Posterior cingulate gyrus (tissue), 11 donors: ENCODE measurements at regions of chr6 and their contacts with region 1.

Region 1: DNA sequence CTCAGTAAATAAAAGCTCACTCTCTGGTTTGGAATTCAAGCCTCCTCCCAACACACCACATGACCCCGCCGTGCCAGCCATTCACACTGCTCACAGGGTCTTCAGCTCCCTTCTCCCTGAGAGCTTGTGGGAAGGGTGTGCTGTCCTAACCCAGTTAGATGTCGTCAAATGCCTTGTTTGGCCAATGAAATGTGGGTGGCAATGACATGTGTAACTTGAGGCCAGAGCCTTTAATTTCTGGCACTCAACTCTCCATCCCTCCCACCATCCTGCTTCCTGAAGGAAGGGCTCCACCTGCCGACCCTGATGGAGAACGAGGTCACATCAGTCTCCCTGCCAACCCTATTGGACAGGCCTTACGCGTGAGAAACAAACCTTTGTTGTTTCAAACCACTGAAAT is 224.5 kb upstream of the AGPAT4 start:
- DNase-seq: peak in 1 of 10 donors; percentile 29

Region 2: GRCh38 chr6:161333410-161333809 is 164.9 kb before region 1 on chr6:
- intact Hi-C with region 1: no loop called
- DNase-seq: no peak

Region 3: GRCh38 chr6:161418463-161418945 is 79.9 kb before region 1 on chr6:
- intact Hi-C with region 1: loop called (anchors 2 kb)
- DNase-seq: peak in 1 of 10 donors; percentile 54